Transverse colon (tissue), 4 donors: ENCODE measurements at regions of chr4 and their contacts with region 1.

Region 1: DNA sequence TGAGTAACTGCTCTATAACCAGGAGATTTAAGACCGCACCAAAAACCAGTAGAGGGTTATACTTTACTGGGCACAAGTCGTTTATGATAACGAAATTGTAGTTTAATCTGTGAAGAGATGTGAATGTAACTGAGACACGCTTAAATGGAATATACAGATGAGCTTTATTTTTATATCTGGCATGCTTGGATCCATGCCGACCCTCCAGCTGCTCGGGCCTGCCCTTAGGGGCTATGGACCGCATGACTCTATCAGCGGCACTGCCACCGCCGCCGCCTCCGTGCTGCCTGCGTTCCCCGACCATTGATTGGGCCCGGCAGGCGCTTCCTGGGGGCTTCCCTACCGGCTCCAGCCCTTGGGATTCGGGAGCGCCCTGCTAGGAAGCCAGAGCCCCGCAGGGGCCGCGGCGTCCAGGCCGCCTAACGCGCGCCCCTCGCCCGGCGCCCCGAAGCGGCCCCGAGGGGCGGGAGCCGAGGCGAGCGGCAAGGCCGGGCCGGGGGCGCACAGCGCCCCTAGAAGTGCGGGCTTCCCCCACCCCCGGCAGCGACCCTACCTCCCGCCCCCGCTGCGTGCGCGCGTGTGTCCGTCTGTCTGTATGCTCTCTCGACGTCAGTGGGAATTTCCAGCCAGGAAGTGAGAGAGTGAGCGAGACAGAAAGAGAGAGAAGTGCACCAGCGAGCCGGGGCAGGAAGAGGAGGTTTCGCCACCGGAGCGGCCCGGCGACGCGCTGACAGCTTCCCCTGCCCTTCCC is at the start of gene NFKB1:
- DNase-seq: peak; percentile 73
- H3K4me3 ChIP-seq: peak within 1 kb of the TSS; percentile 77 to 95 (median 78)
- H3K27ac ChIP-seq: peak within 1 kb of the TSS; percentile 93 to 99 (median 98)
- H3K4me1 ChIP-seq: peaks cover 21 to 47% (median 32%) of the 10 kb centered on the region in 4 donors
- H3K27me3 ChIP-seq: no peaks in the 10 kb centered on the region
- CTCF ChIP-seq: peak in 2 of 5 experiments; percentile 3 to 5
- EP300 ChIP-seq: no peak
- POLR2A ChIP-seq: peak; percentile 19
- total RNA-seq, gene NFKB1: 20.9 to 35.8 (median 25.2) TPM

Region 2: GRCh38 chr4:102578819-102579218 is 77.9 kb after region 1 on chr4:
- in situ Hi-C with region 1: no loop called
- intact Hi-C with region 1: no loop called
- DNase-seq: no peak
- H3K4me3 ChIP-seq: no peak overlapping the region
- H3K27ac ChIP-seq: no peak overlapping the region
- H3K4me1 ChIP-seq: peaks cover 0 to 16% (median 8%) of the 10 kb centered on the region in 4 donors
- H3K27me3 ChIP-seq: no peaks in the 10 kb centered on the region
- CTCF ChIP-seq: no peak
- EP300 ChIP-seq: no peak
- POLR2A ChIP-seq: no peak

Region 3: DNA sequence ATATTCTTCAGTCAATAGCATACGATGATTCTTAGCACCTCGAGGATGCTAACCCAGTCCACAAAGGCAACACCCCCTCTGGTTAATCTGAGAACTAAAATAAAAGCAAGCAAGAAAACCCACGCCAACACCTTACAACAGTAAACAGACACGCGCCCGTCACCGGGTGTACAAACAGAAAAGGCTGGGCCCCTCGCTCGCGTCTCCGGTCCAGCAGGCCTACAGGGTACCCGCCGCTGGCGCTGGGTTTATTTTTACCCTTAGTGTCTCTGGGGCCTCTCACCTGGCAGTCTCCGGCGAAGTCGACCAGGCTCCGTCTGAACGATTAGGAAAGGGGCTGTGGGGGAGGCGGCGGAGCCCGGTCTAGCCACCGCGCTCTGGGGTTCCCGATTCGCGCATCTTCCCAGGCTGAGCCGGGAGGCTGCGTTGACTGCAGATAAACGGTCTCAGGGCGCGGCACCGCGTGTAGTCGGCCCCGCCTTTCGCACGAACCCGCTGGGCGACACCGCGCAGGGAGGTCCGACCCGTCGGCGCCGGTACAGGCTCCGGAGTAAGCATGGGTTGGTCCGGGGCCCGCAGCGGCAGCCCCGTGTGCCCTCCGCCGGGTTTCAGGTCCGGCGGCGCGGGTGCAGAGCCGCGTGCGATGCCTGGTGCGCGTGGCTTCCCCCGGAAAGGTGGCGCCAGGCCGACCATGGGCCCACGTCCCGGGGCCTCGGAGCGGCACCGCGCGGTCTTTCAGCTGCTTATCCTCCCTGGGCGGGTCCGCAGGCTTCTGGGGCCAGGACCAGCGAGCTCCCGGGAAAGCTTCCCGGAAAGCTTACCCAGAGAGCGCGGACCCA is 575.2 kb after region 1 on chr4:
- in situ Hi-C with region 1: no loop called
- intact Hi-C with region 1: loop called (anchors 10 kb)
- DNase-seq: peak; percentile 59
- H3K4me3 ChIP-seq: peak overlapping the region; percentile 47 to 67 (median 62)
- H3K27ac ChIP-seq: peak overlapping the region; percentile 75 to 86 (median 85)
- H3K4me1 ChIP-seq: peaks cover 0 to 21% (median 9%) of the 10 kb centered on the region in 4 donors
- H3K27me3 ChIP-seq: no peaks in the 10 kb centered on the region
- CTCF ChIP-seq: no peak
- EP300 ChIP-seq: no peak
- POLR2A ChIP-seq: no peak